Prostate gland (tissue), 2 donors: ENCODE measurements at regions of chr16 and their contacts with region 1.

Region 1: DNA sequence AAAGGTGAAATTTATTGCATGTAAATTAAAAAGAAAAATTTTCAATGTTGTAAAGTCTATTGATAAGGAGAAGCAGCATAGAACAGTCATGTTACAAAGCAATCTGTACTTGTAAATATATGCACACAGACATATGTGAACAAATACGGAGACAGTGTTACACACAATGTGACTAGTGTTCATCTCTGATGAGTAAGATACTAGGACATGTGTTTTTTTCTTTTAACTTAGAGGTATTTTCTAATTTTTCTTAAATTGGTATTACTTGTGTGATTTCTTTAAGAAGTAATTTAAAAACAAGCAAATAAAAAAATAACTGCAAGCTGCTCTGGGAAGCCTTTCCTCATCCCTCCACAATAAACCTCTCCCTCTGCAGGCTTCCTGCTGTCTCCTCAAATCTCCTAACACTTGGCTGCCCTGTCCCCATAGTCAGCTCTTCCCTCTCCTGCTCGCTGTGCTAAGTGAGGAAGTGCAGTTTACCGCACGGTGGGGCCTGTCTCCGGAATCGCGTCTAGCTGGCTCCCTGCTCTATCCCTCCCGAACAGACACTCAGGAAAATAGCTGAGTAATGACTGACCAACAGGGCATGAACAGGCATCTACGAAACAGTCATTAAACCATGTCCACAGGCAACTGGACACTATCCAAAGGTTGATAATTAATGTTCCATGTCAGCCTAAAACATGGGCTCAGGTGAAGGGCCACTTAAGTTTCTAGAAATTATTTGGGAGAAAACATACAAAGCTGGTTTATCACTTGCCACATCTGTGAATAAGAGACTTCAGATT is 35.9 kb downstream of the CMTM4 start:
- DNase-seq: peak; percentile 62
- H3K4me3 ChIP-seq: no peak overlapping the region
- H3K27ac ChIP-seq: peak overlapping the region; percentile 57 to 60
- H3K4me1 ChIP-seq: no peaks in the 10 kb centered on the region
- H3K27me3 ChIP-seq: no peaks in the 10 kb centered on the region
- CTCF ChIP-seq: peak in 3 of 4 experiments; percentile 11 to 27 (median 17)
- POLR2A ChIP-seq: no peak

Region 2: GRCh38 chr16:66696669-66697630 is 36.3 kb after region 1 on chr16 and contains the start of gene CMTM4:
- intact Hi-C with region 1: loop called (anchors 5 kb)
- DNase-seq: peak; percentile 86
- H3K4me3 ChIP-seq: peak within 1 kb of the TSS; percentile 65 to 76
- H3K27ac ChIP-seq: peak within 1 kb of the TSS; percentile 93 to 94
- H3K4me1 ChIP-seq: no peaks in the 10 kb centered on the region
- H3K27me3 ChIP-seq: no peaks in the 10 kb centered on the region
- CTCF ChIP-seq: peak in 2 of 4 experiments; percentile 25 to 41
- POLR2A ChIP-seq: peak; percentile 32
- total RNA-seq, gene CMTM4: 46.9 to 57.7 TPM